ENCODE measurements at regions of chr3 and their contacts with region 1.

Region 1: GRCh38 chr3:80355144-80355543 is 587.3 kb upstream of the ROBO1 start:
- DNase-seq: no peak
- H3K4me3 Mint-ChIP-seq: no peak overlapping the region
- H3K27ac Mint-ChIP-seq: no peak overlapping the region
- H3K4me1 Mint-ChIP-seq: no peaks in the 10 kb centered on the region
- H3K27me3 Mint-ChIP-seq: no peaks in the 10 kb centered on the region

Region 2: GRCh38 chr3:80395023-80395422 is 39.9 kb after region 1 on chr3:
- CTCF ChIA-PET with region 1: no interaction called
- POLR2A ChIA-PET with region 1: no interaction called
- intact Hi-C with region 1: loop called (anchors 1 kb)
- DNase-seq: no peak
- H3K4me3 Mint-ChIP-seq: no peak overlapping the region
- H3K27ac Mint-ChIP-seq: no peak overlapping the region
- H3K4me1 Mint-ChIP-seq: no peaks in the 10 kb centered on the region
- H3K27me3 Mint-ChIP-seq: no peaks in the 10 kb centered on the region